ENCODE measurements at regions of chr6 and their contacts with region 1.

Region 1: GRCh38 chr6:90478789-90479602 is 107.9 kb downstream of the MAP3K7 start:
- DNase-seq: peak; percentile 94 to 97
- H3K4me3 ChIP-seq: no peak overlapping the region
- CTCF ChIP-seq: peak in 1 of 3 donors; percentile 73
- POLR2A ChIP-seq: no peak

Region 2: GRCh38 chr6:89934685-89935366 is 544.2 kb before region 1 on chr6:
- intact Hi-C with region 1: loop called (anchors 5 kb)
- DNase-seq: no peak
- H3K4me3 ChIP-seq: no peak overlapping the region
- CTCF ChIP-seq: no peak
- POLR2A ChIP-seq: no peak

Region 3: GRCh38 chr6:90098001-90098531 is 380.9 kb before region 1 on chr6:
- intact Hi-C with region 1: loop called (anchors 10 kb)
- DNase-seq: peak; percentile 88 to 90
- H3K4me3 ChIP-seq: no peak overlapping the region
- CTCF ChIP-seq: no peak
- POLR2A ChIP-seq: no peak

Region 4: GRCh38 chr6:90701146-90701781 is 222.3 kb after region 1 on chr6:
- intact Hi-C with region 1: no loop called
- DNase-seq: no peak
- H3K4me3 ChIP-seq: no peak overlapping the region
- CTCF ChIP-seq: no peak
- POLR2A ChIP-seq: no peak

Region 5: DNA sequence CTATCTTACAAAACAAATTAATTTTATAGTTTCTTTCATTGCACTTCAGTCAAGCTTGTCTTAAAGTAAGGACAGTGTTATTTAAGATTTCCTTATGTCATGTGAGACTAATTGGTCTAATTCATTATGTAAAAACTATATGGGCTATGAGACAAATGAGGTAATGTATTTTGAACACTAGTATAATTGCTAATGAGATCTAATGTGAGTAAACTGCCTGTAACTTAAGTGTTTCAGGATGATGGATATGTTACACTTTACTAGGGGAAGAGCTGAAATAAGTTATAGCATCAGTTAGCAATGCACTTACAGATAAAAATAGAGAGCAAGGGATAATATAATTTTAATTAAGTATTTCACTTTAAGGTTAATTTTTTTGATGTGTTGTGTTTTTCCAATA is 494.2 kb after region 1 on chr6:
- intact Hi-C with region 1: no loop called
- DNase-seq: no peak
- H3K4me3 ChIP-seq: no peak overlapping the region
- CTCF ChIP-seq: no peak
- POLR2A ChIP-seq: no peak

Measured in lower leg skin (tissue), 4 donors.